Common myeloid progenitor, CD34-positive (primary cell): ENCODE measurements at regions of chr16 and their contacts with region 1.

Region 1: GRCh38 chr16:67260426-67261075 is 11.8 kb downstream of the SLC9A5 start:
- DNase-seq: peak; percentile 63 to 83 (median 80)
- H3K4me3 ChIP-seq: no peak overlapping the region
- H3K27ac ChIP-seq: no peak overlapping the region
- H3K4me1 ChIP-seq: peaks cover 0 to 3% (median 0%) of the 10 kb centered on the region in 4 experiments
- H3K27me3 ChIP-seq: peaks cover 0 to 3% (median 0%) of the 10 kb centered on the region in 5 experiments

Region 2: DNA sequence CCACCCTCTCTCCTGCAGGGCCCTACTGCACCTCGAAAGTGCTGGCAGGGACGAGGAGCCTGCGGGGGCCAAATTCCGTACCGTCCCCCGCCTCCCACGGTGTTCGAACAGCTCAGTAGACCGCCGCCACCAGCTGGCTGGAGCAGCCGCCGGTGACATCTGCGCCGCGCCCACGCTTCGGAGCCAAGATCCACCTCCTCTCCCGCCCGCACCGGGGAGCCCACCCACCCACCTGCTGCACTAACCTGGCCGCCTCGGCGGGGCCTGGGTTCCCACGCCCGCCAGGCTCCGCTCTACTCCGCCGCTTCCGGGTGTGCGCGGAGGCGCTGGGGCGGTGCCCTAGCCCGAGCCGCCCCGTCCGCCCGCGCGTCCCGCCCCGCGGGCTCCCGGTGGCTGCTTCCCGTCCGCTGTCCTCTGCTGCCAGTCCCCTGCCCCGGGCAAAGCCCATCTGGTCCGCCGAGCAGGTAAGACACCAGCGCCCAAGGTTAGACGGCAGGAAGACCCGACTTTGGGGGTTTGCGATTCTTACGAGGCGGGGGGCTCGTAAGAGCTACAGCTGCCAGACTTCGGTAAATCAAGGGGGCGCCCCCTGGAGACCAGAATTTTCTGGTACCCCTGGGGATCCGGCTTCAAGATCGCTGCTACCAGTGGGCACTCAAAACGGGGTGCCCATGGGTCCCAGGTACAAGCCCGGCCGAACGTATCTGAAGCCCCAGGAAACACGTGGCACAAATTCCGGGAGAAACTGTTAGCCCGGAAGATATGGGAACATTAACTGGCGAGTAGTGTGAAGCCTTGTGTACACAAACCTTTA is 100.8 kb before region 1 on chr16 and contains the starts of genes FBXL8 and TRADD:
- CTCF ChIA-PET with region 1: no interaction called
- POLR2A ChIA-PET with region 1: no interaction called
- DNase-seq: peak; percentile 71 to 84 (median 76)
- H3K4me3 ChIP-seq: peak within 1 kb of the TSS; percentile 74 to 92 (median 84)
- H3K27ac ChIP-seq: peak within 1 kb of the TSS in 1 of 2 experiments; percentile 64
- H3K4me1 ChIP-seq: peaks cover 3 to 63% (median 56%) of the 10 kb centered on the region in 4 experiments
- H3K27me3 ChIP-seq: peaks cover 6 to 51% (median 15%) of the 10 kb centered on the region in 5 experiments

Region 3: DNA sequence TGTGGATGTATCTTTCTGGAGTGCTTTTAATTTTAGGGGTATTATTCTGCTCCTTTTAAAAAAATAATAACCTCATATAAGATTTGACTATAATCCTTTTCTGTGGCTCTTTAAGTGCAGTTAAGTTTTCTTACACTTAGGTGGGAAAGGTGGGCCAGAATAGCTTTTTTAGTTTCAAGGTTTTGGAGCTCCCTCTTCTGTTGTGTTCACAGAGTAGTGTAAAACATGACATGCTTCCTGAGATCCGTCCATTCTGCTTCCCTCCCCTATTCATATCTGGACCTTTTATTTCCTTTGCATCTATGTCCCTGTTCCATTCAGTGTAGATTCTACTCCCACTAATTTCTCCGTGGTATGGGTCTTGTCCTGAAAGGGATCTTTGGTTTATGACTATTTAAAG is 78.9 kb after region 1 on chr16:
- CTCF ChIA-PET with region 1: interaction called, 19 read pairs
- POLR2A ChIA-PET with region 1: no interaction called
- DNase-seq: peak in 2 of 3 donors; percentile 29 to 40
- H3K4me3 ChIP-seq: no peak overlapping the region
- H3K27ac ChIP-seq: no peak overlapping the region
- H3K4me1 ChIP-seq: no peaks in the 10 kb centered on the region
- H3K27me3 ChIP-seq: no peaks in the 10 kb centered on the region